CD4-positive, alpha-beta memory T cell (primary cell): ENCODE measurements at regions of chr11 and their contacts with region 1.

Region 1: GRCh38 chr11:269146-269890 is 8.9 kb upstream of the NLRP6 start:
- DNase-seq: peak; percentile 82 to 91 (median 89)
- H3K4me3 ChIP-seq: peak overlapping the region; percentile 6 to 62
- H3K4me3 Mint-ChIP-seq: peak overlapping the region; percentile 81 to 95 (median 87)
- H3K27ac ChIP-seq: peak overlapping the region; percentile 72
- H3K27ac Mint-ChIP-seq: peak overlapping the region; percentile 91 to 99 (median 96)
- H3K4me1 ChIP-seq: peaks cover 25% of the 10 kb centered on the region
- H3K4me1 Mint-ChIP-seq: peaks cover 20 to 34% (median 28%) of the 10 kb centered on the region in 4 donors
- H3K27me3 ChIP-seq: no peaks in the 10 kb centered on the region
- H3K27me3 Mint-ChIP-seq: no peaks in the 10 kb centered on the region

Region 2: GRCh38 chr11:225734-226453 is 43.4 kb before region 1 on chr11:
- CTCF ChIA-PET with region 1: no interaction called
- POLR2A ChIA-PET with region 1: no interaction called
- intact Hi-C with region 1: no loop called
- DNase-seq: no peak
- H3K4me3 ChIP-seq: no peak overlapping the region
- H3K4me3 Mint-ChIP-seq: no peak overlapping the region
- H3K27ac ChIP-seq: no peak overlapping the region
- H3K27ac Mint-ChIP-seq: peak overlapping the region in 3 of 7 donors; percentile 43 to 84 (median 44)
- H3K4me1 ChIP-seq: no peaks in the 10 kb centered on the region
- H3K4me1 Mint-ChIP-seq: peaks cover 0 to 13% (median 6%) of the 10 kb centered on the region in 4 donors
- H3K27me3 ChIP-seq: no peaks in the 10 kb centered on the region
- H3K27me3 Mint-ChIP-seq: no peaks in the 10 kb centered on the region

Region 3: GRCh38 chr11:236774-237767 is 32.2 kb before region 1 on chr11 and contains the start of gene PSMD13:
- CTCF ChIA-PET with region 1: interaction called, 4 read pairs
- POLR2A ChIA-PET with region 1: interaction called, 26 read pairs
- intact Hi-C with region 1: loop called (anchors 1 kb)
- DNase-seq: peak; percentile 85 to 90 (median 88)
- H3K4me3 ChIP-seq: peak within 1 kb of the TSS; percentile 96 to 100
- H3K4me3 Mint-ChIP-seq: peak within 1 kb of the TSS; percentile 98 to 100 (median 99)
- H3K27ac ChIP-seq: peak within 1 kb of the TSS; percentile 100
- H3K27ac Mint-ChIP-seq: peak within 1 kb of the TSS; percentile 97 to 100 (median 100)
- H3K4me1 ChIP-seq: peaks cover 22% of the 10 kb centered on the region
- H3K4me1 Mint-ChIP-seq: peaks cover 31 to 64% (median 46%) of the 10 kb centered on the region in 4 donors
- H3K27me3 ChIP-seq: no peaks in the 10 kb centered on the region
- H3K27me3 Mint-ChIP-seq: no peaks in the 10 kb centered on the region
- total RNA-seq, gene PSMD13: 99.9 to 107 TPM

Region 4: GRCh38 chr11:279966-280582 is 10.8 kb after region 1 on chr11:
- CTCF ChIA-PET with region 1: interaction called, 34 read pairs
- POLR2A ChIA-PET with region 1: interaction called, 549 read pairs
- intact Hi-C with region 1: loop called (anchors 1 kb)
- DNase-seq: peak in 4 of 5 donors; percentile 55 to 61 (median 57)
- H3K4me3 ChIP-seq: peak overlapping the region in 1 of 2 donors; percentile 59
- H3K4me3 Mint-ChIP-seq: peak overlapping the region; percentile 84 to 91 (median 88)
- H3K27ac ChIP-seq: no peak overlapping the region
- H3K27ac Mint-ChIP-seq: peak overlapping the region in 4 of 7 donors; percentile 70 to 92 (median 84)
- H3K4me1 ChIP-seq: peaks cover 60% of the 10 kb centered on the region
- H3K4me1 Mint-ChIP-seq: peaks cover 30 to 61% (median 46%) of the 10 kb centered on the region in 4 donors
- H3K27me3 ChIP-seq: no peaks in the 10 kb centered on the region
- H3K27me3 Mint-ChIP-seq: no peaks in the 10 kb centered on the region

Region 5: GRCh38 chr11:299951-300735 is 30.8 kb after region 1 on chr11:
- CTCF ChIA-PET with region 1: interaction called, 17 read pairs
- POLR2A ChIA-PET with region 1: interaction called, 15 read pairs
- intact Hi-C with region 1: loop called (anchors 5 kb)
- DNase-seq: peak in 1 of 5 donors; percentile 19
- H3K4me3 ChIP-seq: no peak overlapping the region
- H3K4me3 Mint-ChIP-seq: no peak overlapping the region
- H3K27ac ChIP-seq: no peak overlapping the region
- H3K27ac Mint-ChIP-seq: peak overlapping the region in 3 of 7 donors; percentile 13 to 55 (median 35)
- H3K4me1 ChIP-seq: peaks cover 31% of the 10 kb centered on the region
- H3K4me1 Mint-ChIP-seq: peaks cover 11 to 43% (median 19%) of the 10 kb centered on the region in 4 donors
- H3K27me3 ChIP-seq: no peaks in the 10 kb centered on the region
- H3K27me3 Mint-ChIP-seq: peaks cover 0 to 3% of the 10 kb centered on the region in 2 donors

Region 6: DNA sequence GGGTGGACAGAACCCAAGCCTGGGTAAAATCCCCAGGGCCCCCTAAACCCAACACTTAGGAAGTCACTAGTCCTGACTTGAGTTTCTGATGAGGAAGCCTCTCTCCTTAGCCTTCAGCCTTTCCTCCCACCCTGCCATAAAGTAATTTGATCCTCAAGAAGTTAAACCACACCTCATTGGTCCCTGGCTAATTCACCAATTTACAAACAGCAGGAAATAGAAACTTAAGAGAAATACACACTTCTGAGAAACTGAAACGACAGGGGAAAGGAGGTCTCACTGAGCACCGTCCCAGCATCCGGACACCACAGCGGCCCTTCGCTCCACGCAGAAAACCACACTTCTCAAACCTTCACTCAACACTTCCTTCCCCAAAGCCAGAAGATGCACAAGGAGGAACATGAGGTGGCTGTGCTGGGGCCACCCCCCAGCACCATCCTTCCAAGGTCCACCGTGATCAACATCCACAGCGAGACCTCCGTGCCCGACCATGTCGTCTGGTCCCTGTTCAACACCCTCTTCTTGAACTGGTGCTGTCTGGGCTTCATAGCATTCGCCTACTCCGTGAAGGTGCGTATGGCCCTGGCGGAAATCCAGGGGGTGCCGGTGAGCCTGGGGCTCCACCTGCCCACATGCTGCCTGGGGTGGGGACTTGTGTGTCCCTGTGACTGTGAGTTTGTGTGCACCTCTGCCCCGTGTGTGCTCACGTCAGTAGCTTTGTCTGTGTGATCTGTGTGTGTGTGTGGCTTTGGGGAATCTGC is 44.6 kb after region 1 on chr11 and contains the start of gene IFITM1:
- CTCF ChIA-PET with region 1: interaction called, 17 read pairs
- POLR2A ChIA-PET with region 1: interaction called, 66 read pairs
- intact Hi-C with region 1: loop called (anchors 2 kb)
- DNase-seq: peak; percentile 72 to 85 (median 79)
- H3K4me3 ChIP-seq: peak within 1 kb of the TSS; percentile 59 to 91
- H3K4me3 Mint-ChIP-seq: peak within 1 kb of the TSS; percentile 92 to 99 (median 98)
- H3K27ac ChIP-seq: peak within 1 kb of the TSS; percentile 76
- H3K27ac Mint-ChIP-seq: peak within 1 kb of the TSS; percentile 94 to 100 (median 98)
- H3K4me1 ChIP-seq: peaks cover 37% of the 10 kb centered on the region
- H3K4me1 Mint-ChIP-seq: peaks cover 29 to 56% (median 35%) of the 10 kb centered on the region in 4 donors
- H3K27me3 ChIP-seq: no peaks in the 10 kb centered on the region
- H3K27me3 Mint-ChIP-seq: no peaks in the 10 kb centered on the region
- total RNA-seq, gene IFITM1: 119 to 121 TPM

Region 7: DNA sequence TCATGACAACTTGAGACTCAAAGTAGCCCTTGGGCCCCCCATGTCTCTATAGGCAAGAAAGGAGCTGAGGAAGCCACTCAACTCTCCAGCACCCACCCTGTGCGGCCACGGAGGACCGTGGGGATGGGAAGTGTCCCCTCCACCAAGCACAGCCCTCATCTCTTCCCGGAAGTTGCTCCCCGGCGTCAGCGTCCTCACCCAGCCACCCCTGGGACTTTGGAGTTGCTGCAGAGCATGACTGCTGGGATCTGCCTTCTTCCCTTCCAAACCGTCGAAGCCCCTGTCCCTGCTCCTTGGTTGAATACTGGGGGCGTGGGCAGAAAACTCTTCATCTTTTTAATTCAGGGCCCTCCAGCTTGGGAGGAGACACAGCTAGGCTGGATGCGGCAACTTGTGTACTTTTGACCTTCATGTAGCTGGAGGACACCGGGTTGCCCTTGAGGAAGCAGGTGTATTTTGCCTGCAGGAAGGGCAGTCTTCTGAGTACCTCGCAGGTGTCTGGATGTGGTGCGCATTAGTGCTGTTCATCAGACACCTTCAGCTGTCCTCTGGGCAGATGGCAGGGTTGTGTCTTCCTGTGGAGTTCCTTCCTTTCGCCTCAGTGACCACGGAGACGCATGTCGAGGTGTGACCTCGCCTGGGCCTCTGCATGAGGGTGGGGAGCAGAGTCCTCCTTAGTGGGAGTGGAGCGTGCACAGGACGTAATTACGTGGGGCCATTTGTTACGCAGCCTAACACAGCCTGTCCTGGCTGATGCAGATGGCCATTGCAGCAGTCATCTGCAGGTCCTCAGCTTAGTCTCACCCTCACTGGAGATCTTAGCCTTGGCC is 63.5 kb after region 1 on chr11:
- CTCF ChIA-PET with region 1: no interaction called
- POLR2A ChIA-PET with region 1: no interaction called
- intact Hi-C with region 1: no loop called
- DNase-seq: no peak
- H3K4me3 ChIP-seq: no peak overlapping the region
- H3K4me3 Mint-ChIP-seq: peak overlapping the region in 3 of 8 donors; percentile 38 to 45 (median 43)
- H3K27ac ChIP-seq: no peak overlapping the region
- H3K27ac Mint-ChIP-seq: no peak overlapping the region
- H3K4me1 ChIP-seq: peaks cover 33% of the 10 kb centered on the region
- H3K4me1 Mint-ChIP-seq: peaks cover 17 to 60% (median 38%) of the 10 kb centered on the region in 4 donors
- H3K27me3 ChIP-seq: no peaks in the 10 kb centered on the region
- H3K27me3 Mint-ChIP-seq: no peaks in the 10 kb centered on the region

Region 8: DNA sequence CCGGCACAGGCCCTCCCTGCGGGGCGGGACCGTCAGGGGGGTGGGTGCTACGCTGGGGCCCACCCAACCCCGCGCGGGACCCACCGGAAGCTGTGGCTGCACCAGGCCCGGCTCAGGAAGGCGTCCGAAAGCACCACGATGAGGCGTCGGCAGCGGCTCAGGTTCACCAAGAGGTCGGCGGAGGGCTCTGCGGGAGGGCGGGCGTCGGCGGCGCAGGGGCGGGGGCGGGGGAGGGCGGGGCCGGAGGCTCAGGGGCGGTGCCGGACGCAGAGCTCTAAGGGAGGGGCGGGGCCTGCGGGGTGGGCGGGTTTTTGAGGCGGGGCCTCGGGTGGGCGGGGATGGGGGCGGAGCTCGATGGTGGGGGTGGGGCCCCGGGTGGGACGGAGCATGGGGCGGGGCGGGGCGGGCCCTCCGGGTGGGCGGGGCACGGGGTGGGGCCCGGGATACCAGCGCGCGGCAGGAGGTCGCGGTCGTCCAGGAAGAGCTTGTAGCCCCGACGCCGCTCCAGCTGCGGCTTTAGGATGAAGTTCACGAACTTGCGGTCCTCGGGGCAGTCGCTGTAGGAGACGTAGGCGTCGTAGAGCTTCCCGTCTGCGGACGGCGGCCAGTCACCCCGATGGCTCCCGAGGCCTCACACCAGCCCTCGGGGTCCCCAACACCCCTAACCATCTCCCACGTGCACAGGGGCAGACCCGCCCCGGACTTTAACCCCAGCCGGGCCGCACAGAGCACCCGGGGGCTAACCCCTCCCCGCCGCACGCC is 137.8 kb after region 1 on chr11:
- CTCF ChIA-PET with region 1: no interaction called
- POLR2A ChIA-PET with region 1: interaction called, 21 read pairs
- intact Hi-C with region 1: no loop called
- DNase-seq: peak; percentile 93 to 97 (median 95)
- H3K4me3 ChIP-seq: peak overlapping the region in 1 of 2 donors; percentile 28
- H3K4me3 Mint-ChIP-seq: peak overlapping the region in 5 of 8 donors; percentile 28 to 62 (median 41)
- H3K27ac ChIP-seq: peak overlapping the region; percentile 59
- H3K27ac Mint-ChIP-seq: peak overlapping the region; percentile 22 to 92 (median 72)
- H3K4me1 ChIP-seq: peaks cover 21% of the 10 kb centered on the region
- H3K4me1 Mint-ChIP-seq: peaks cover 0 to 18% (median 9%) of the 10 kb centered on the region in 4 donors
- H3K27me3 ChIP-seq: no peaks in the 10 kb centered on the region
- H3K27me3 Mint-ChIP-seq: no peaks in the 10 kb centered on the region

Region 9: GRCh38 chr11:506238-506994 is 237.1 kb after region 1 on chr11:
- CTCF ChIA-PET with region 1: no interaction called
- POLR2A ChIA-PET with region 1: interaction called, 12 read pairs
- intact Hi-C with region 1: loop called (anchors 2 kb)
- DNase-seq: peak; percentile 94 to 98 (median 97)
- H3K4me3 ChIP-seq: peak overlapping the region; percentile 91 to 99
- H3K4me3 Mint-ChIP-seq: peak overlapping the region; percentile 95 to 100 (median 98)
- H3K27ac ChIP-seq: peak overlapping the region; percentile 100
- H3K27ac Mint-ChIP-seq: peak overlapping the region; percentile 100
- H3K4me1 ChIP-seq: peaks cover 35% of the 10 kb centered on the region
- H3K4me1 Mint-ChIP-seq: peaks cover 6 to 42% (median 25%) of the 10 kb centered on the region in 4 donors
- H3K27me3 ChIP-seq: no peaks in the 10 kb centered on the region
- H3K27me3 Mint-ChIP-seq: no peaks in the 10 kb centered on the region